Ovary (tissue), 10 donors: ENCODE measurements at regions of chr5 and their contacts with region 1.

Region 1: DNA sequence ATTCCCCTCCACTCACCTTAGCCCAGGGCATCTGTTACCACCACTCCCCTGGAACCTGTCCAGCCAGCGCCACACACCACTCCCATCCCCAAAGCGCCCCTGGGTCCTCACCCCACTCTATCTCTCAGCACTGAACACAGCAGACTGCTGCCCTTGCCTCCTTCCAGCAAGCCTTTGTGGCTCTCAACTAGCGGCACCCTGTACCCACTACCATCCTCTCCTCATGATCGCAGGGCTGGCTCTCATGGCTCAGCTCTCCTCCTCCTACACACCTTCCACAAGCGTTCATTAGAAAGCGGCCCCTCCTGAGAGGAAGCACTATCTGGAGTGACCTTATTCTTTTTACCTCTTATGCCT is 13.3 kb upstream of the BASP1 start:
- DNase-seq: no peak
- H3K4me3 ChIP-seq: no peak overlapping the region
- H3K27ac ChIP-seq: no peak overlapping the region
- H3K4me1 ChIP-seq: no peaks in the 10 kb centered on the region
- H3K27me3 ChIP-seq: no peaks in the 10 kb centered on the region
- CTCF ChIP-seq: no peak
- EP300 ChIP-seq: no peak
- POLR2A ChIP-seq: no peak

Region 2: DNA sequence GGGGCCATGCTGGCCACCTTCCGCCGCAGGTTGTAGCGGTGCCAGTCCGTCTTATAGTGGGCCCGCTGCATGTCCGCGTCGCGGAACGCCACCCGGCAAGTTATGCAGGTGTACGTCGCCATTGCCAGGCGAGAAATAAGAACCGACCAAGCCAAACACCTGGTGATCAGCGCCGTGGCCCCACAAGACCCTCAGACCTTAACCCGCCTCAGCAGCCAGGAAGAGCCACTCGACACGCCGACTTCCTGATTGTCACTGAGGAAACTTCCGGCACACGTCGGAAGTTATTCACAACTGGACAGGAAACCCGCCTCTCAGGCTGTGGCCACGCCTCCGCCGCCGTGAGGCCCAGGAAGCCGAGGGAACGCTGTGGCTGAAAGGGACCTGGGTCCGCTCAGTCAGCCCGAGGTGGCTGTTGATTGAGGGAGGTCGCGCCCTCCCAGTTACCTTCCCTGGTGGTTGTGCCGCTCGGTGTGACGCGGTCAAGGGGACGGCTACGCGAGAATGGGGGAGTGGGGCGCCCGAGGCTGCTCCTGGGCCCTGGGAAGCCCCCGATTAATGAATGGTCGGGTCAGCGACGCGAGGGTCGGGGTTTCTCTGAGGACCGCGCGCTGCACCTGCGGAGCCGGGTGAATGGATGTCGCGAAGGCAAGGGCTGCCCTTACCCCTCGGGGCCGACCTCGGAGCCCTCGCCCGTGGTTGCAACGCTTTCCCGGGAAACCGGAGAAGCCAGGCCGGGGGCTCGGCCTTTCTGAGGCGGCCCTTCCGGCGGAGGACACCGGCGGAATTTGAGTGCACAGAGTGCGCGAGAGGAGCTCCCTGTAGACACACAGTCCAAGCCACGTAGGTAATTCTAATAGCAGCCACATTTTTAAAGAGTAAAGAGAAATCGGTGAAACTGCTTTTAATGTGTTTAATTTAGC is 738.3 kb before region 1 on chr5 and contains the start of gene ZNF622:
- intact Hi-C with region 1: no loop called
- DNase-seq: peak; percentile 81 to 89 (median 85)
- H3K4me3 ChIP-seq: peak within 1 kb of the TSS; percentile 89
- H3K27ac ChIP-seq: peak within 1 kb of the TSS in 1 of 2 donors; percentile 31
- H3K4me1 ChIP-seq: peaks cover 19% of the 10 kb centered on the region
- H3K27me3 ChIP-seq: no peaks in the 10 kb centered on the region
- CTCF ChIP-seq: no peak
- EP300 ChIP-seq: no peak
- POLR2A ChIP-seq: peak; percentile 57
- total RNA-seq, gene ZNF622: 18.0 to 25.0 (median 20.4) TPM

Region 3: DNA sequence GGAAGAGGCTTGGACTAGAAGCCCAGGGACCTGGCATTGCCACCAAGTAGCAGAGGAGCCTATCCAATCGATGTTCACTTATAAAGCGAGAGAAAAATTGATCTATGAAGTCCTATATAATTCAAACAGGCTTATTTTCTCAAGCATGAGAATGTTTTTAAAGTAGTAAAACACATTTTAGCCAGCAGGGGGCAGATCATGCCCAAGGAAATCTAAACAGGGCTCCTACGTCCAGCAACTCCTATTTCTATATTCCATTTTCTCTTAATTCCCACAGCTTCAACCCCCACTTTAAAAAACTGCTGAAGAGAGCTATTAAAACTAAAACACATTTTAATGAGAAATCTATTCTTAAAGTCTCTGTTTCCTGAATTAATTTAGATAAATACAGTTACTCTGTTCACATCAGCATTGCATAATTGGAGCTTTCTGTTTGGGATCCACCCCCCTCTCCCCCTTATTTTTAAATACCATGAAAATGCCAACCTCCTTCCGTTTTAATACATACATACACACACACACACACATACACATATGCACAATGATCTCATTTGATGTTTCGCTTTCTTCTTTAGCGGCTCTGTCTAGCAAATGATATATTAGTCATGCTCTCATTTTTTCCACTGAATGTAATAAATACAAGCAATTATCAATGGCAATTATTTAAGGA is 412.9 kb before region 1 on chr5:
- intact Hi-C with region 1: loop called in 1 of 4 experiments (anchors 2 kb)
- DNase-seq: peak in 1 of 5 donors; percentile 49
- H3K4me3 ChIP-seq: no peak overlapping the region
- H3K27ac ChIP-seq: no peak overlapping the region
- H3K4me1 ChIP-seq: no peaks in the 10 kb centered on the region
- H3K27me3 ChIP-seq: no peaks in the 10 kb centered on the region
- CTCF ChIP-seq: peak; percentile 56 to 83 (median 77)
- EP300 ChIP-seq: no peak
- POLR2A ChIP-seq: no peak